ENCODE measurements at regions of chr11 and their contacts with region 1.

Region 1: GRCh38 chr11:94493281-94494125 is at the starts of genes ANKRD49 and MRE11:
- DNase-seq: peak; percentile 94 to 98 (median 94)
- ATAC-seq: peak; percentile 99
- H3K4me3 ChIP-seq: peak within 1 kb of the TSS; percentile 78
- H3K27ac ChIP-seq: peak within 1 kb of the TSS; percentile 93
- H3K4me1 ChIP-seq: peaks cover 0 to 3% of the 10 kb centered on the region in 2 experiments; a peak in 2 of 5 replicates
- H3K27me3 ChIP-seq: no peaks in the 10 kb centered on the region
- CTCF ChIP-seq: no peak
- EP300 ChIP-seq: no peak
- POLR2A ChIP-seq: peak; percentile 85
- RAD21 ChIP-seq: no peak
- polyA plus RNA-seq, gene ANKRD49: 28.8 to 43.5 TPM
- polyA plus RNA-seq, gene MRE11: 21.0 to 29.1 TPM

Region 2: GRCh38 chr11:94171693-94172440 is 321.6 kb before region 1 on chr11:
- CTCF ChIA-PET with region 1: no interaction called
- POLR2A ChIA-PET with region 1: no interaction called
- in situ Hi-C with region 1: loop called (anchors 10 kb)
- intact Hi-C with region 1: loop called (anchors 5 kb)
- DNase-seq: peak; percentile 75 to 84 (median 82)
- ATAC-seq: peak; percentile 96
- H3K4me3 ChIP-seq: no peak overlapping the region
- H3K27ac ChIP-seq: no peak overlapping the region
- H3K4me1 ChIP-seq: no peaks in the 10 kb centered on the region; a peak in 1 of 5 replicates
- H3K27me3 ChIP-seq: no peaks in the 10 kb centered on the region
- CTCF ChIP-seq: peak; percentile 77 to 91 (median 79)
- EP300 ChIP-seq: no peak
- POLR2A ChIP-seq: no peak
- RAD21 ChIP-seq: peak; percentile 50 to 60; a peak in 3 of 4 replicates

Region 3: GRCh38 chr11:94449437-94449836 is 44.1 kb before region 1 on chr11:
- CTCF ChIA-PET with region 1: no interaction called
- POLR2A ChIA-PET with region 1: no interaction called
- in situ Hi-C with region 1: no loop called
- intact Hi-C with region 1: no loop called
- DNase-seq: no peak
- ATAC-seq: no peak
- H3K4me3 ChIP-seq: no peak overlapping the region
- H3K27ac ChIP-seq: no peak overlapping the region
- H3K4me1 ChIP-seq: no peaks in the 10 kb centered on the region
- H3K27me3 ChIP-seq: no peaks in the 10 kb centered on the region
- CTCF ChIP-seq: no peak
- EP300 ChIP-seq: no peak
- POLR2A ChIP-seq: no peak
- RAD21 ChIP-seq: no peak